Activated CD4-positive, alpha-beta T cell treated with anti-CD3 and anti-CD28 coated beads for 36 hours (primary cell): ENCODE measurements at regions of chr11 and their contacts with region 1.

Region 1: DNA sequence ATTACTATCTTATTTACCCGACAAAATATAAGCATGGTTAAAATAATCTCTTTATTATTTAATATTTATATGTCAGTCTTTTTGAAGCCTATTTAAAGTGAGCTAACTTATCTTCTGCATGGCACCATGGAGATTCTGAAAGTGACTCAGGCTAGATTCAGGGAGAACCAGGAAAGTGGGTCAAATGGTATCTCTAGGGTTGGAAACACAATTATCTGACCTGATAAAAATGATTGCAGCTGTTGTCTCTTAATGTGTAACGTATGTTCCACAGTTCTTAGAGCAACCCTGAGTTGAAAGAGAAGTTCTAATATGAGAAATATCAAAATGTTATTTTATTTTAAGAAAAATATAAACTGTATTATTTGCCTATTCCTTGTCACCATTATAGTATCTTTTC is 143.1 kb upstream of the CARD18 start:
- DNase-seq: no peak
- ATAC-seq: no peak
- H3K4me3 Mint-ChIP-seq: no peak overlapping the region
- H3K27ac Mint-ChIP-seq: no peak overlapping the region
- H3K4me1 Mint-ChIP-seq: no peaks in the 10 kb centered on the region
- H3K27me3 Mint-ChIP-seq: peaks cover 12% of the 10 kb centered on the region

Region 2: DNA sequence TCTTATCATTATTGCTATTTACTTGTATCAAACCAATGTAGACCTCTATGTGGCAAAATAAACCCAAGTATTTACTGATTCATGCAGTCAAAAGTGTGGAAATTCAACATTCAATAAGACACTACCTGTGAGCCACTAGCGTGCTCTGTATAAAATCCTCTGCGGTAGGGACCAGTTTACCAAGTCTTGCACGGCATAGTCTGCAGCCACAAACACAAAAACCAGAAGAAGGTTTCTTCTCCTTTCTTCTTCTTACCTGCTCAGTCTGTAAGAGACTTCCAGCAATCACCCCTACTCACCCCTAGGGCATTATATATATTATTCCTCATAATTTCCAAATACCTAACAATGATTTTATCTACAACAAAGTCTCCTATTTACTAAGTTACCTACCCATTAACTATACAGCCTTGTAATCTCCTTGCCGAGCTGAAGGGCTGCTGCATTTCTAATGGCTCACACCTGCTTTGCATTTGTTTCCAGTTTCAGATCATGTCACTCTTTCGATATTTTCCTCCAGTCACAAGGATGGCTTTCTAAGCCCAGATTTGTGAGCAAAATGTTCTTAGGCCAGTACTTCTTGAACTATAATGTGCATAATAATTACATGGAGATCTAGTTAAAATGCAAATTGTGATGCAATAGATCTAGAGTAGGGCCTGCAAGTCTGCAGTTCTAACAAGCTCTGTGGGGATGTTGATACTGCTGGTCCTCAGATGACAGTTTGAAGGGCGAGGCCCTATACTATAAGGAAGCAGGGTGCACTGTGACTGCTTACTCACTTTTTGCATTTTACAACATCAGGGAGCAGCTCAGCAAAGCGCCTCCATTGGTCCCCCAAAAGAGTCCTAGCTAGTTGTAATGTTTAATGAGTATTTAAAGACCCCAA is 1438.1 kb before region 1 on chr11:
- CTCF ChIA-PET with region 1: no interaction called
- POLR2A ChIA-PET with region 1: no interaction called
- intact Hi-C with region 1: no loop called
- DNase-seq: no peak
- ATAC-seq: no peak
- H3K4me3 Mint-ChIP-seq: no peak overlapping the region
- H3K27ac Mint-ChIP-seq: no peak overlapping the region
- H3K4me1 Mint-ChIP-seq: no peaks in the 10 kb centered on the region
- H3K27me3 Mint-ChIP-seq: no peaks in the 10 kb centered on the region

Region 3: GRCh38 chr11:105236664-105237063 is 46.0 kb before region 1 on chr11:
- CTCF ChIA-PET with region 1: no interaction called
- POLR2A ChIA-PET with region 1: no interaction called
- intact Hi-C with region 1: loop called in 1 of 2 experiments (anchors 2 kb)
- DNase-seq: no peak
- ATAC-seq: no peak
- H3K4me3 Mint-ChIP-seq: no peak overlapping the region
- H3K27ac Mint-ChIP-seq: no peak overlapping the region
- H3K4me1 Mint-ChIP-seq: no peaks in the 10 kb centered on the region
- H3K27me3 Mint-ChIP-seq: peaks cover 4% of the 10 kb centered on the region

Region 4: GRCh38 chr11:105361651-105362050 is 79.0 kb after region 1 on chr11:
- CTCF ChIA-PET with region 1: no interaction called
- POLR2A ChIA-PET with region 1: no interaction called
- intact Hi-C with region 1: no loop called
- DNase-seq: no peak
- ATAC-seq: no peak
- H3K4me3 Mint-ChIP-seq: no peak overlapping the region
- H3K27ac Mint-ChIP-seq: no peak overlapping the region
- H3K4me1 Mint-ChIP-seq: no peaks in the 10 kb centered on the region
- H3K27me3 Mint-ChIP-seq: peaks cover 4% of the 10 kb centered on the region